ENCODE measurements at regions of chr6 and their contacts with region 1.

Region 1: GRCh38 chr6:42453031-42453653 is 1.4 kb upstream of the TRERF1 start:
- DNase-seq: peak; percentile 47 to 80 (median 78)
- ATAC-seq: peak; percentile 85
- H3K4me3 ChIP-seq: peak overlapping the region; percentile 80
- H3K4me3 Mint-ChIP-seq: peak overlapping the region; percentile 84 to 100 (median 96)
- H3K27ac ChIP-seq: peak overlapping the region; percentile 56
- H3K27ac Mint-ChIP-seq: peak overlapping the region in 8 of 9 donors; percentile 11 to 93 (median 72)
- H3K4me1 ChIP-seq: peaks cover 4 to 20% of the 10 kb centered on the region in 2 donors
- H3K4me1 Mint-ChIP-seq: peaks cover 25 to 41% (median 33%) of the 10 kb centered on the region in 7 donors
- H3K27me3 ChIP-seq: no peaks in the 10 kb centered on the region
- H3K27me3 Mint-ChIP-seq: peaks cover 0 to 11% (median 0%) of the 10 kb centered on the region in 5 donors

Region 2: GRCh38 chr6:42217519-42218367 is 235.4 kb before region 1 on chr6 and contains the start of gene MRPS10:
- CTCF ChIA-PET with region 1: no interaction called
- POLR2A ChIA-PET with region 1: interaction called, 4 read pairs
- intact Hi-C with region 1: loop called (anchors 1 to 2 kb)
- DNase-seq: peak; percentile 72 to 92 (median 87)
- ATAC-seq: peak; percentile 100
- H3K4me3 ChIP-seq: peak within 1 kb of the TSS; percentile 96
- H3K4me3 Mint-ChIP-seq: peak within 1 kb of the TSS; percentile 92 to 100 (median 98)
- H3K27ac ChIP-seq: peak within 1 kb of the TSS; percentile 77
- H3K27ac Mint-ChIP-seq: peak within 1 kb of the TSS; percentile 87 to 99 (median 97)
- H3K4me1 ChIP-seq: peaks cover 9 to 14% of the 10 kb centered on the region in 2 donors
- H3K4me1 Mint-ChIP-seq: peaks cover 7 to 34% (median 24%) of the 10 kb centered on the region in 7 donors
- H3K27me3 ChIP-seq: no peaks in the 10 kb centered on the region
- H3K27me3 Mint-ChIP-seq: no peaks in the 10 kb centered on the region
- total RNA-seq, gene MRPS10: 17.0 to 30.3 (median 25.3) TPM

Region 3: GRCh38 chr6:42390228-42390934 is 62.8 kb before region 1 on chr6:
- CTCF ChIA-PET with region 1: interaction called, 7 read pairs
- POLR2A ChIA-PET with region 1: interaction called, 211 read pairs
- intact Hi-C with region 1: loop called (anchors 1 to 2 kb)
- DNase-seq: peak in 8 of 9 donors; percentile 69 to 90 (median 82)
- ATAC-seq: peak; percentile 88
- H3K4me3 ChIP-seq: peak overlapping the region; percentile 50
- H3K4me3 Mint-ChIP-seq: peak overlapping the region; percentile 71 to 87 (median 84)
- H3K27ac ChIP-seq: peak overlapping the region; percentile 85
- H3K27ac Mint-ChIP-seq: peak overlapping the region; percentile 97 to 100 (median 99)
- H3K4me1 ChIP-seq: peaks cover 89% of the 10 kb centered on the region in 2 donors
- H3K4me1 Mint-ChIP-seq: peaks cover 75 to 100% (median 96%) of the 10 kb centered on the region in 7 donors
- H3K27me3 ChIP-seq: no peaks in the 10 kb centered on the region
- H3K27me3 Mint-ChIP-seq: no peaks in the 10 kb centered on the region

Region 4: DNA sequence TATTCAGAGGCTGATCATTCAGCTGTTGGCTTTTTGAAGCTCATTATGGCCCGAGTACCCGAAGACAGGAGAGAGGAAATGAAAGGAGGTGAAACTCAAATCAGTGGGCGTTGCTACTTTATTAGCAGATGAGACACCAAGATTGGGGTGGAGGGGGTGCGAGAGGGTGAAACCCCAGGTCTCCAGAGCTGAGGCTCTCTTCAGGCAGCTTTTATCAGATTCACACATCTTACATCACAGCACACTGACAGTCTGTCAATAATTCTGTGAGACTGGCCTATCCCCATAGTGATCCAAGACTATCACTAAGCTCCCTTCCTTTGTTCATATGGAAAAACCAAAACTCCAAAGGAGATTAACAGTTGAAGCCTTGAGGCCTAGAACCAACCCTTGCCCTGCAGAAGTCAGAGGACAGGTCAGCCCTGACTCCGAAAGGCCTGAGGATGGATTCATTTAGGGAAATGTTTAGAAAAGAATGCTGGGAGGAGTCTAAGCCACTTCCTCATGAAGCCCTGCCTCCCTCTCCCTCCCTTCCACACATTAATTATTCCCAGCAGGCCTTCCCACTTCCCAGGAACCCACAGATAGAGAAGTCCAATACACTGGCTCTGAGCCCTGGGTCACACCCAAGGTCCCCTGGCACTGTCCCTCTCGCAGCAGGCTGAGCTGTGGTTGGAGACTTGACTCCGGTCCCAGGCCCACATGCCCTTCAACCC is 24.7 kb before region 1 on chr6:
- CTCF ChIA-PET with region 1: interaction called, 4 read pairs
- POLR2A ChIA-PET with region 1: interaction called, 21 read pairs
- intact Hi-C with region 1: loop called in 1 of 2 experiments (anchors 2 kb)
- DNase-seq: no peak
- ATAC-seq: peak; percentile 86
- H3K4me3 ChIP-seq: peak overlapping the region; percentile 34
- H3K4me3 Mint-ChIP-seq: peak overlapping the region; percentile 2 to 73 (median 25)
- H3K27ac ChIP-seq: no peak overlapping the region
- H3K27ac Mint-ChIP-seq: peak overlapping the region in 8 of 9 donors; percentile 63 to 92 (median 78)
- H3K4me1 ChIP-seq: peaks cover 32 to 49% of the 10 kb centered on the region in 2 donors
- H3K4me1 Mint-ChIP-seq: peaks cover 37 to 69% (median 62%) of the 10 kb centered on the region in 7 donors
- H3K27me3 ChIP-seq: no peaks in the 10 kb centered on the region
- H3K27me3 Mint-ChIP-seq: no peaks in the 10 kb centered on the region

Region 5: DNA sequence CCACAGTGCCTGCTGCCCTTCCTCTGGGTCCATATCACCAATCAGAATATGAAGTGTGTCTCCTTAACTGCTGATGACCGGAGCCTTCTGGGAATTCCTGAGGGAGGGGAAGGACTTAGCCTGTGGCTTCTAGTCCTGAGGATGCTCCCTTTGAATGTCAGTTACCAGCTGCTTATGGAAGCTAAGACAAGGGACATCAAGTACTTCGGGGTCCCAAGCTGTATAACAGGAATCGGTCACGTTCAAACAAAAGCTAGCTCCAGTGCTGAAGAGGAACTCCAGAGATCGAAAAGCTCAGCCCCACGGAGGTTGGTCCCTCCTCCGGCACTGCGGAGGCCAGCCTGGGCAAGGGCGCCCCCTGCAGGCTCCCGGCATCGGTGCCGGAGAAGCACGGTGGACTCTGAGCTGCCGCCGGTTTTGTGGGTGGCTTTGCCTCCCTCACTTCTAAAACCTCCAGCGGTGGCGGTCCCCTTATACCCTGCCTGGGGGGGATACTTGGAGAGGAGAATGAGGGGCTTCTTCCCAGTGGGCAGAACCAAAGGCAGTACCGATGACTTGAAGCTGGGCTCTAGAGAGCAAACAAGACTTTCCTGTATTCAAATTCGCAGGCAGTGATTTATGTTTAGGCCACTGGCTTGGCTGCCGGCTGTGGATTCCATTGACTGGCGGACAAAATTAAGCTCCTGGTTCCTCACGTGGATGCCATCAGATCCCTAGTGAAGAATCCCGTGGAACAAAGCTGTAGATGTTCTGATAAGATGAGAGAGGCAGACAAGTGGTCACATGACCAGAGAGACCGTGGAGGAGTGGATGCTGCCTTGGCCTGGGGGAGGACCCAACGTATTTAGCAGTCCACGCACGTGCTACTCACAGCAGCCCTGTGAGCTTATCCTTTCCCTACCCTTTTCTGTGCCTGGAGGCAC is 94.5 kb after region 1 on chr6:
- CTCF ChIA-PET with region 1: interaction called, 4 read pairs
- POLR2A ChIA-PET with region 1: interaction called, 7 read pairs
- intact Hi-C with region 1: loop called (anchors 2 to 5 kb)
- DNase-seq: peak; percentile 73 to 94 (median 86)
- ATAC-seq: peak; percentile 100
- H3K4me3 ChIP-seq: peak overlapping the region; percentile 52
- H3K4me3 Mint-ChIP-seq: peak overlapping the region; percentile 23 to 78 (median 68)
- H3K27ac ChIP-seq: peak overlapping the region; percentile 26
- H3K27ac Mint-ChIP-seq: peak overlapping the region in 7 of 9 donors; percentile 42 to 74 (median 48)
- H3K4me1 ChIP-seq: peaks cover 5 to 13% of the 10 kb centered on the region in 2 donors
- H3K4me1 Mint-ChIP-seq: peaks cover 5 to 14% (median 12%) of the 10 kb centered on the region in 7 donors
- H3K27me3 ChIP-seq: no peaks in the 10 kb centered on the region
- H3K27me3 Mint-ChIP-seq: peaks cover 0 to 12% (median 9%) of the 10 kb centered on the region in 5 donors

Region 6: GRCh38 chr6:42629845-42630244 is 176.7 kb after region 1 on chr6:
- CTCF ChIA-PET with region 1: no interaction called
- POLR2A ChIA-PET with region 1: no interaction called
- intact Hi-C with region 1: no loop called
- DNase-seq: no peak
- ATAC-seq: no peak
- H3K4me3 ChIP-seq: no peak overlapping the region
- H3K4me3 Mint-ChIP-seq: no peak overlapping the region
- H3K27ac ChIP-seq: no peak overlapping the region
- H3K27ac Mint-ChIP-seq: peak overlapping the region in 3 of 9 donors; percentile 16 to 67 (median 47)
- H3K4me1 ChIP-seq: no peaks in the 10 kb centered on the region
- H3K4me1 Mint-ChIP-seq: peaks cover 0 to 18% (median 10%) of the 10 kb centered on the region in 7 donors
- H3K27me3 ChIP-seq: no peaks in the 10 kb centered on the region
- H3K27me3 Mint-ChIP-seq: no peaks in the 10 kb centered on the region

Measured in naive thymus-derived CD4-positive, alpha-beta T cell (primary cell).